Activated naive CD4-positive, alpha-beta T cell treated with anti-CD3 and anti-CD28 coated beads, Interleukin-2, amount 10 ng/mL, durations not matched to agents 7 days and 5 days (primary cell): ENCODE measurements at regions of chr14 and their contacts with region 1.

Region 1: GRCh38 chr14:55731881-55732498 is 152.0 kb downstream of the KTN1 start:
- DNase-seq: peak; percentile 70
- H3K4me3 Mint-ChIP-seq: no peak overlapping the region
- H3K27ac Mint-ChIP-seq: no peak overlapping the region
- H3K4me1 Mint-ChIP-seq: peaks cover 17% of the 10 kb centered on the region
- H3K27me3 Mint-ChIP-seq: peaks cover 4% of the 10 kb centered on the region

Region 2: GRCh38 chr14:55752586-55753390 is 20.8 kb after region 1 on chr14:
- CTCF ChIA-PET with region 1: no interaction called
- DNase-seq: no peak
- H3K4me3 Mint-ChIP-seq: no peak overlapping the region
- H3K27ac Mint-ChIP-seq: no peak overlapping the region
- H3K4me1 Mint-ChIP-seq: peaks cover 4% of the 10 kb centered on the region
- H3K27me3 Mint-ChIP-seq: peaks cover 5% of the 10 kb centered on the region

Region 3: GRCh38 chr14:56339855-56340701 is 608.1 kb after region 1 on chr14:
- CTCF ChIA-PET with region 1: interaction called, 43 read pairs
- DNase-seq: peak; percentile 74
- H3K4me3 Mint-ChIP-seq: no peak overlapping the region
- H3K27ac Mint-ChIP-seq: peak overlapping the region; percentile 78
- H3K4me1 Mint-ChIP-seq: peaks cover 8% of the 10 kb centered on the region
- H3K27me3 Mint-ChIP-seq: no peaks in the 10 kb centered on the region

Region 4: GRCh38 chr14:56422703-56423213 is 690.8 kb after region 1 on chr14:
- CTCF ChIA-PET with region 1: interaction called, 29 read pairs
- DNase-seq: peak; percentile 29
- H3K4me3 Mint-ChIP-seq: no peak overlapping the region
- H3K27ac Mint-ChIP-seq: no peak overlapping the region
- H3K4me1 Mint-ChIP-seq: peaks cover 2% of the 10 kb centered on the region
- H3K27me3 Mint-ChIP-seq: peaks cover 7% of the 10 kb centered on the region

Region 5: DNA sequence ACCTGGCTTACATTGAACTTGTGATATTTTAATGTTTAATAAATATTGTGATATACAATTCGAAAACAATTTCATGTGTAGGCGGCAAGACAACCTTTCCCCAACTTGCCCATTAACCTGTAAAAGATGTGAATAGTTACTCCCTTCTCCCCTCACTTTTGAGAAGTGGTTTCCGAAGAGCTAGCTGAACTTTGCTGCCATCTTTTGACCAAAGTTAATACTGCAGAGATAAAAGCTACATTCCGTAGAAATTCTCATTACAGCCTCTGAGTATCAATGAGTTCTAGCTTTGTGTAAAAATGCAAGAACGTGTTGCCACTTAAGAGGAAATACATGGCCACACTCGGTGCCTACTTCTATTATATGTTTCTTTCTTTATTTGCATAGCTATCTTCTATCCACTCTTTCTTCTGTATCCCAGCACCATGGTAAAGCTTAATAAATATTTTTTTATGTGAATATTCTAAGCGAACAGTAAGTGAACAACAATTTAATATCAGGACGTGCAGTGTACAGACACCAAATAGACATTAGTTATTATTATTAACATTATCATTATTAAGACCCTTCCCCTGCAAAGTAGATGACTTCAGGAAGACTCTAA is 742.5 kb after region 1 on chr14:
- CTCF ChIA-PET with region 1: interaction called, 14 read pairs
- DNase-seq: no peak
- H3K4me3 Mint-ChIP-seq: no peak overlapping the region
- H3K27ac Mint-ChIP-seq: no peak overlapping the region
- H3K4me1 Mint-ChIP-seq: no peaks in the 10 kb centered on the region
- H3K27me3 Mint-ChIP-seq: no peaks in the 10 kb centered on the region